ENCODE measurements at regions of chr3 and their contacts with region 1.

Region 1: DNA sequence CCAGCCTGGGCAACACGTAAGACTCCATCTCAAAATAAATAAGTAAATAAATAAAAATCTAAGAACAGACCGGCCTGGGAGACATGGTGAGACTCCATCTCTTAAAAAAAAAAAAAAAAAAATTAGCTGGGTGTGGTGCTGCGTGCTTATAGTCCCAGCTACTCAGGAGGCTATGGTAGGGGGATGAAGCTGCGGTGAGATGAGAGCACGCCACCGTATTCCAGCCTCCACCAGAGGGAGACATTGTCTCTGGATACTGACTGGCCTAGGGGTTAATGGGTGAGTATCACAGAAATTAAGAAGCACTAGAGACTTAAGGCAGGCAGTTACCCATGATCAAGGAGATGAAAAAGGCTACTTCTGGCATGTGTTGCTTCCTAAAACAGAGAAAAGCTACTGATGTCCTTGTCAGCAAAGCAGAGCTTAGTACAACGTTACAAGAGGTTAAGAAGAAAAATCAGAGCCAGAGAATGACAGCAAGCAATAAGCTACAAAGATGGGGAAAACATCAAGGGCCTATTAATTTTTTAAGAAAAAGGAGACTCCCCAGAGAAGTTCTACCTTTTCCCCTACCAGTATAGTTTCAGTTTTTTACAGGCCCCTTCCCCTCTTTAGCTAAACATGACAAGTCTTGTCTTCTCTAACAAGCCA is 8.6 kb downstream of the TFRC start:
- DNase-seq: no peak
- H3K4me3 ChIP-seq: no peak overlapping the region
- CTCF ChIP-seq: peak; percentile 84

Region 2: GRCh38 chr3:196051282-196052076 is 21.8 kb before region 1 on chr3:
- CTCF ChIA-PET with region 1: interaction called, 25 read pairs
- POLR2A ChIA-PET with region 1: no interaction called
- DNase-seq: no peak
- H3K4me3 ChIP-seq: no peak overlapping the region
- CTCF ChIP-seq: no peak

Region 3: GRCh38 chr3:196186651-196187573 is 113.6 kb after region 1 on chr3:
- CTCF ChIA-PET with region 1: interaction called, 298 read pairs
- POLR2A ChIA-PET with region 1: no interaction called
- DNase-seq: no peak
- H3K4me3 ChIP-seq: no peak overlapping the region
- CTCF ChIP-seq: no peak

Region 4: GRCh38 chr3:196235452-196236122 is 162.3 kb after region 1 on chr3:
- CTCF ChIA-PET with region 1: interaction called, 11 read pairs
- POLR2A ChIA-PET with region 1: no interaction called
- DNase-seq: no peak
- H3K4me3 ChIP-seq: no peak overlapping the region
- CTCF ChIP-seq: no peak

Region 5: GRCh38 chr3:196440041-196440537 is 366.8 kb after region 1 on chr3:
- CTCF ChIA-PET with region 1: no interaction called
- POLR2A ChIA-PET with region 1: no interaction called
- DNase-seq: peak; percentile 67
- H3K4me3 ChIP-seq: no peak overlapping the region
- CTCF ChIP-seq: no peak

Region 6: DNA sequence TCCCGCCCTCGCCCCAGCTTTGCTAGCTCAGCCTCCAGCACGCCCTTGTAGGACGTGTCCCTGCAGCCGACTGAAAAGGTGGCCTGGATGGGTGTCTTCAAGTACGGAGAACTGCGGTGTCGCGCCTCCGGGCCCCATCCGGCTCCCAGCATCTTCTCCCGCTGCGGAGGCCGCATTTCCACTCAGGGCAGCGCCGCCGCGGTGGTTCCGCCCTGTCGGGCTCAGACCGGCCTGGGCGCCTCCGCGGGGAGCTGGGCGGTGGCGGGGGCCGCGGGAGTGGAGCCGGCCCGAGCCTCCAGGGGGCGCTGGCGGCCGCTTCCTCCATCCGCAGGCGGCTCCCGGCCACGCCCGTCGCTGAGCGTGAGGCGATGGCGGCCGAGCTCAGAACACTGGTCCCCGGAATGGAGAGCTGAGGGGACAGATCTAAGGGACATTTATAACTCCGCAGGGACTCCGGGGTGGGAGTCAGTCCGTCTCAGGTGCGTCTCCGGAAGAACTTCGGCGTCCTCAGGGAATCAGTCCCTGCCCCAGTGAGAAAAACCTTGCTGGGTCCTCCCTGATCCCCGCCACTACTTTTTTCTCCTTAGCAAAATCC is 455.4 kb after region 1 on chr3:
- CTCF ChIA-PET with region 1: interaction called, 31 read pairs
- POLR2A ChIA-PET with region 1: no interaction called
- DNase-seq: no peak
- H3K4me3 ChIP-seq: peak overlapping the region; percentile 57
- CTCF ChIP-seq: peak; percentile 82